ENCODE measurements at regions of chr22 and their contacts with region 1.

Region 1: DNA sequence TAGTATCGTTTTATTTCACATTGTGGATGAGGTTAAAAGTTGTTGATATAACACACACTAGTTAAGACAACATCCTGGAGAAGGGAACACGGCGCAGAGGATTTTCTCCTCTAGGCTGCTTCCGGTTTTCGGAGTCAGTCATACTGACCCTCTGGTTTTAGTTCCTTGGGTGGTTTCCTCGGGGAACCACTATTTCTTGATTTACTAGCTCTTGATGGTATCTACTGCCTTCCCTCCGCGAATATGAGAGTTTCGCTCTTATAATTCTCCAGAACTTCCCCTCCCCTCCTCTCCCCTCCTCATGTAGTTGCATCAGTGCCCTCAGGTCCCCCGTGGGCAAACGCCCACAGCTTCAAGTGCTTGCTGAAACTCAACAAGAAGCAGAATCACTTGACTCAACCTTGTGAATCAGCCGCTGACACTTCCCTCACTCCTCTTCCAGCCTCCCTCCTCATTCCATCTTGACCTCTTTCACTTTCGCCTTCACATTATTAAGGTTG is 15.9 kb upstream of the APOBEC3A start:
- DNase-seq: peak; percentile 37
- H3K4me3 Mint-ChIP-seq: peak overlapping the region; percentile 58
- H3K27ac Mint-ChIP-seq: peak overlapping the region; percentile 83
- H3K4me1 Mint-ChIP-seq: peaks cover 44% of the 10 kb centered on the region
- H3K27me3 Mint-ChIP-seq: peaks cover 20% of the 10 kb centered on the region

Region 2: GRCh38 chr22:38793721-38794466 is 147.6 kb before region 1 on chr22 and contains the start of gene DNAL4:
- intact Hi-C with region 1: loop called (anchors 1 kb)
- DNase-seq: peak; percentile 90
- H3K4me3 Mint-ChIP-seq: peak within 1 kb of the TSS; percentile 93
- H3K27ac Mint-ChIP-seq: peak within 1 kb of the TSS; percentile 80
- H3K4me1 Mint-ChIP-seq: peaks cover 22% of the 10 kb centered on the region
- H3K27me3 Mint-ChIP-seq: peaks cover 4% of the 10 kb centered on the region
- total RNA-seq, gene DNAL4: 5.0 TPM in 2 replicates

Region 3: GRCh38 chr22:38953577-38954413 is 12.3 kb after region 1 on chr22:
- intact Hi-C with region 1: loop called (anchors 1 kb)
- DNase-seq: peak; percentile 84
- H3K4me3 Mint-ChIP-seq: peak overlapping the region; percentile 63
- H3K27ac Mint-ChIP-seq: peak overlapping the region; percentile 98
- H3K4me1 Mint-ChIP-seq: peaks cover 67% of the 10 kb centered on the region
- H3K27me3 Mint-ChIP-seq: peaks cover 6% of the 10 kb centered on the region

Region 4: GRCh38 chr22:39097098-39098020 is 155.8 kb after region 1 on chr22 and contains the start of gene APOBEC3H:
- intact Hi-C with region 1: loop called (anchors 1 kb)
- DNase-seq: peak; percentile 32
- H3K4me3 Mint-ChIP-seq: peak within 1 kb of the TSS; percentile 83
- H3K27ac Mint-ChIP-seq: peak within 1 kb of the TSS; percentile 96
- H3K4me1 Mint-ChIP-seq: peaks cover 78% of the 10 kb centered on the region
- H3K27me3 Mint-ChIP-seq: no peaks in the 10 kb centered on the region
- total RNA-seq, gene APOBEC3H: 5.0 and 7.4 TPM in 2 replicates

Region 5: DNA sequence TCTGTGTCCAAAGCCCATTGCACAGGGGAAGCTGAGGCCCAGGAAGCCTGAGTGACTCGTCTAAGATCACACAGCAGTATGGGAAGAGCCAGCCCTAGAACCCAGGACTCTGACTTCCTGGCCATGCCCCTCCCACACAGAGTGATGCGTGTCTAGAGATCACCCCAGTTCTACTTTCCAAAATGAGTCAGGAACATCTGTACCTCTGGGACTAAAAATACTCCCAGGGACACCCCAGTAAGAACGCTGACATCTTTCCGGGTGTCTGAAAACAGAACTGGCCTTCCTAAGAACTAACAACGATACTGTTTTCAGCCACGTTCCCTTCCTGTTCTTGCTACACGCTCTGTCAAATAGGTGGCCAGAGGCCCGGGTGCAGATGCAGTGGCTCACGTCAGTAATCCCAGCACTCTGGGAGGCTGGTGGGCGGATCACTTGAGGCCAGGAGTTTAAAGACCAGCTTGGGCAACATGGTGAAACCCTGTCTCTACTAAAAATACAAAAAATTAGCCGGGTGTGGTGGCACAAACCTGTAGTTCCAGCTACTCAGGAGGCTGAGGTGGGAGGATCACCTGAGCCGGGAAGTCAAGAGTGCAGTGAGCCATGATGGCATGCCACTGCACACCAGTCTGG is 325.0 kb after region 1 on chr22:
- intact Hi-C with region 1: loop called (anchors 1 kb)
- DNase-seq: peak; percentile 28
- H3K4me3 Mint-ChIP-seq: no peak overlapping the region
- H3K27ac Mint-ChIP-seq: peak overlapping the region; percentile 89
- H3K4me1 Mint-ChIP-seq: peaks cover 28% of the 10 kb centered on the region
- H3K27me3 Mint-ChIP-seq: peaks cover 2% of the 10 kb centered on the region